GM12878 (cell line): ENCODE measurements at regions of chr2 and their contacts with region 1.

Region 1: GRCh38 chr2:24490674-24491625 is at the start of gene NCOA1:
- DNase-seq: no peak
- ATAC-seq: peak; percentile 83
- H3K4me3 ChIP-seq: peak within 1 kb of the TSS; percentile 91
- H3K27ac ChIP-seq: peak within 1 kb of the TSS; percentile 71
- H3K4me1 ChIP-seq: peaks cover 8% of the 10 kb centered on the region
- H3K27me3 ChIP-seq: no peaks in the 10 kb centered on the region
- CTCF ChIP-seq: peak in 1 of 3 experiments; percentile 30; a peak in 2 of 6 replicates
- EP300 ChIP-seq: no peak
- POLR2A ChIP-seq: peak; percentile 89
- RAD21 ChIP-seq: peak; percentile 20; the same call in 1 of the 2 replicates
- polyA plus RNA-seq, gene NCOA1: 1.9 to 3.3 TPM

Region 2: DNA sequence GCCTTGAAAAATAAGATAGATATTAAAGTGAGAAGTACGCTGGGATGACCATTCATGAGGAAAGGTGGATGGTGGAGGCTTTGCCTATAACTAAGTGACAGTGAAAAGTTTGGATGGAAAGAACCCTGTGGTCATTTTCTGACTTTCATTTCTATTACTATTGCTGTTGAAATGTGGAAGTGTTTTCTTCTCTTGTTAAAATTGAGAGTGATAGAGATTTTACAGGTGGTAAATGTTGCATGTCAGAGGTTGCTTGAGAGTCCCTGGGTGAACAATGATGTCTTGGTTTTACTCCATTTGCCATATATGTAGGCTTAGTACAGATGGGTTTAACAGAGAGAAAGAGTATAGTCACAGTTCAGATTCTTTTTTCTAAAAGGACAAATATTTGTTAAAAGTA is 18.5 kb after region 1 on chr2:
- CTCF ChIA-PET with region 1: interaction called, 15 read pairs
- POLR2A ChIA-PET with region 1: interaction called, 3 read pairs
- RAD21 ChIA-PET with region 1: interaction called, 12 read pairs
- SMC1A ChIA-PET with region 1: interaction called, 50 read pairs
- in situ Hi-C with region 1: no loop called
- intact Hi-C with region 1: loop called (anchors 2 kb)
- DNase-seq: peak; percentile 72
- ATAC-seq: peak; percentile 94
- H3K4me3 ChIP-seq: peak overlapping the region; percentile 58; the same call in 1 of the 2 replicates
- H3K27ac ChIP-seq: peak overlapping the region; percentile 84
- H3K4me1 ChIP-seq: peaks cover 37% of the 10 kb centered on the region
- H3K27me3 ChIP-seq: no peaks in the 10 kb centered on the region
- CTCF ChIP-seq: no peak
- EP300 ChIP-seq: peak; percentile 40 to 84; a peak in 3 of 4 replicates
- POLR2A ChIP-seq: no peak
- RAD21 ChIP-seq: 0 out of 2 replicates have a peak, but pooled peaks have one; percentile 7

Region 3: DNA sequence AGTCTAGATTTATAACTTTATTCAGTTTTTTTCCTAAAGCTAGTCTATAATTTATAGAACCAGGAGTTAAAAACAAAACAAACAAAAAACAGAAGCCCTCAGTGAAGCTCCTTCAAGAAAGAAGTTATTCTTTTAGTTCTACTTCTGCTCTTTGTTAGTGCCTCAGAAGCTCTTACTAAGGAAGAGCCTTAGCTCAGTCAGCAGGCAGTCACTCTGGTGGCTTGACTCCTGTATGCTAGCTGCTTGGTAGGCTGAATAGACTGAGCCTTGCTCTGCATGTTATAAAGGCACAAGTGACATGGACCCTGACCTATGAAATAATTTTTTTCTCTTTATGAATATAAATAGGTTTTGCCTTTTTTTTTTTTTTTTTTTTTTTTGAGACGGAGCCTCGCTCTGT is 24.9 kb after region 1 on chr2:
- CTCF ChIA-PET with region 1: interaction called, 3 read pairs
- POLR2A ChIA-PET with region 1: no interaction called
- RAD21 ChIA-PET with region 1: interaction called, 6 read pairs
- SMC1A ChIA-PET with region 1: interaction called, 12 read pairs
- in situ Hi-C with region 1: no loop called
- intact Hi-C with region 1: no loop called
- DNase-seq: no peak
- ATAC-seq: peak; percentile 89
- H3K4me3 ChIP-seq: no peak overlapping the region
- H3K27ac ChIP-seq: 0 out of 2 replicates have a peak overlapping the region, but pooled peaks have one; percentile 13
- H3K4me1 ChIP-seq: peaks cover 15% of the 10 kb centered on the region
- H3K27me3 ChIP-seq: no peaks in the 10 kb centered on the region
- CTCF ChIP-seq: no peak
- EP300 ChIP-seq: no peak
- POLR2A ChIP-seq: no peak
- RAD21 ChIP-seq: no peak

Region 4: GRCh38 chr2:24521975-24522639 is 31.2 kb after region 1 on chr2:
- CTCF ChIA-PET with region 1: interaction called, 3 read pairs
- POLR2A ChIA-PET with region 1: no interaction called
- RAD21 ChIA-PET with region 1: no interaction called
- SMC1A ChIA-PET with region 1: interaction called, 10 read pairs
- in situ Hi-C with region 1: no loop called
- intact Hi-C with region 1: no loop called
- DNase-seq: no peak
- ATAC-seq: peak; percentile 69
- H3K4me3 ChIP-seq: no peak overlapping the region
- H3K27ac ChIP-seq: no peak overlapping the region
- H3K4me1 ChIP-seq: no peaks in the 10 kb centered on the region
- H3K27me3 ChIP-seq: no peaks in the 10 kb centered on the region
- CTCF ChIP-seq: no peak
- EP300 ChIP-seq: no peak
- POLR2A ChIP-seq: no peak
- RAD21 ChIP-seq: no peak

Region 5: GRCh38 chr2:24577481-24577880 is 86.5 kb after region 1 on chr2:
- CTCF ChIA-PET with region 1: no interaction called
- POLR2A ChIA-PET with region 1: interaction called, 6 read pairs
- RAD21 ChIA-PET with region 1: interaction called, 4 read pairs
- SMC1A ChIA-PET with region 1: interaction called, 4 read pairs
- in situ Hi-C with region 1: no loop called
- intact Hi-C with region 1: loop called (anchors 5 kb)
- DNase-seq: peak; percentile 89
- ATAC-seq: peak; percentile 87
- H3K4me3 ChIP-seq: 0 out of 2 replicates have a peak overlapping the region, but pooled peaks have one; percentile 14
- H3K27ac ChIP-seq: peak overlapping the region; percentile 80
- H3K4me1 ChIP-seq: peaks cover 47% of the 10 kb centered on the region
- H3K27me3 ChIP-seq: no peaks in the 10 kb centered on the region
- CTCF ChIP-seq: no peak
- EP300 ChIP-seq: peak; percentile 89 to 93
- POLR2A ChIP-seq: no peak
- RAD21 ChIP-seq: no peak

Region 6: DNA sequence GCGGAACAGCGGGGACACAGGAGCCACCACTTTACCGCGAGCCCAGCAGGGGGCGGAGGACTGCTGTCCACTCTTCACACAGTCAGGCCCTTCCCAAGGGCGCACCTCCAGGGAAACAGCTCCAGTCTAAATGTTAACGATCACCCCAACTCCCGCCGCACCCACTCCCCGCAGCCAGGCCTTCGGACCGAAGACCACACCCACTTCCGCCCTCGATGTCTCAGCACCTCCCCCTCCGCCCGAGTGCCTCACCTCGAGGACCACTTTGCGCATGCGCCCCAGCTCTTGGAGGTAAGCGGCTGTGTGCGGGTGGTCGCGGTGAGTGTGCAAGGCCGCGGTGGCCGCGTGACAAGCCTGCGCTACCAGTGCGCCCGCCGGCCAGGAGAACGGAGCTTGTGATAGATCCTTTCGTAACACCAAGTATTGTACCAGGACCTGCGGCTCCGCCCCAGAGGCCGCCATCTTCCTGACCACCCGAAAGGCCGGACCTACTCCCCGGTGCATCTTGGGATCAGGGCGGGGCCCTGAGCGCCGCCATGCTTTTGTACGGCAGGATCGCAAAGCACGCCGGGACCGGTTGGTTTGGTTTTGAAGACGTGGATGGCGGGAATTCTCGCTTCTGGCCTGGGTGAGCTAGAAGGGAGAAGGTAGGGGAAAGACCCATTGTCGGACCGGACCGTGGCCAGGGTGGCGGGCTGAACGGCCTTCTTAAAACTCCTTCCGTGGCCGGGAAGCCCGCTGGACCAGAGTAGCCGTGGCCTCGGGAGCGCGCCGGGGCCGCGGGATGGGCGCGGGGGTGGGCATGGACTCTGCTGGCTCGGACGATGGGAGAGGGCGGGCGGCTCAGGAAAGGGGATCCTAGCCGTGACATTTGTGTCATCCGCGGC is 302.2 kb after region 1 on chr2 and contains the starts of genes CENPO and PTRHD1:
- CTCF ChIA-PET with region 1: no interaction called
- POLR2A ChIA-PET with region 1: no interaction called
- RAD21 ChIA-PET with region 1: no interaction called
- SMC1A ChIA-PET with region 1: no interaction called
- in situ Hi-C with region 1: no loop called
- intact Hi-C with region 1: loop called (anchors 10 kb)
- DNase-seq: peak; percentile 92
- ATAC-seq: peak; percentile 97
- H3K4me3 ChIP-seq: peak within 1 kb of the TSS; percentile 97
- H3K27ac ChIP-seq: peak within 1 kb of the TSS; percentile 98
- H3K4me1 ChIP-seq: peaks cover 6% of the 10 kb centered on the region
- H3K27me3 ChIP-seq: no peaks in the 10 kb centered on the region
- CTCF ChIP-seq: peak; percentile 36 to 40 (median 37); a peak in 5 of 6 replicates
- EP300 ChIP-seq: no peak
- POLR2A ChIP-seq: peak; percentile 93
- RAD21 ChIP-seq: no peak
- polyA plus RNA-seq, gene CENPO: 18.7 to 23.1 TPM
- polyA plus RNA-seq, gene PTRHD1: 30.6 to 43.9 TPM